Activated CD4-positive, alpha-beta memory T cell treated with anti-CD3 and anti-CD28 coated beads, Interleukin-2, amount 10 ng/mL, durations not matched to agents 7 days and 5 days (primary cell): ENCODE measurements at regions of chr7 and their contacts with region 1.

Region 1: GRCh38 chr7:117212969-117213877 is 109.6 kb downstream of the WNT2 start:
- DNase-seq: peak; percentile 47
- H3K4me3 Mint-ChIP-seq: no peak overlapping the region
- H3K27ac Mint-ChIP-seq: no peak overlapping the region
- H3K4me1 Mint-ChIP-seq: no peaks in the 10 kb centered on the region
- H3K27me3 Mint-ChIP-seq: no peaks in the 10 kb centered on the region

Region 2: GRCh38 chr7:117202511-117202910 is 10.7 kb before region 1 on chr7:
- CTCF ChIA-PET with region 1: interaction called, 10 read pairs
- POLR2A ChIA-PET with region 1: no interaction called
- DNase-seq: no peak
- H3K4me3 Mint-ChIP-seq: no peak overlapping the region
- H3K27ac Mint-ChIP-seq: no peak overlapping the region
- H3K4me1 Mint-ChIP-seq: no peaks in the 10 kb centered on the region
- H3K27me3 Mint-ChIP-seq: no peaks in the 10 kb centered on the region